Posterior vena cava (tissue), 2 donors: ENCODE measurements at regions of chr2 and their contacts with region 1.

Region 1: DNA sequence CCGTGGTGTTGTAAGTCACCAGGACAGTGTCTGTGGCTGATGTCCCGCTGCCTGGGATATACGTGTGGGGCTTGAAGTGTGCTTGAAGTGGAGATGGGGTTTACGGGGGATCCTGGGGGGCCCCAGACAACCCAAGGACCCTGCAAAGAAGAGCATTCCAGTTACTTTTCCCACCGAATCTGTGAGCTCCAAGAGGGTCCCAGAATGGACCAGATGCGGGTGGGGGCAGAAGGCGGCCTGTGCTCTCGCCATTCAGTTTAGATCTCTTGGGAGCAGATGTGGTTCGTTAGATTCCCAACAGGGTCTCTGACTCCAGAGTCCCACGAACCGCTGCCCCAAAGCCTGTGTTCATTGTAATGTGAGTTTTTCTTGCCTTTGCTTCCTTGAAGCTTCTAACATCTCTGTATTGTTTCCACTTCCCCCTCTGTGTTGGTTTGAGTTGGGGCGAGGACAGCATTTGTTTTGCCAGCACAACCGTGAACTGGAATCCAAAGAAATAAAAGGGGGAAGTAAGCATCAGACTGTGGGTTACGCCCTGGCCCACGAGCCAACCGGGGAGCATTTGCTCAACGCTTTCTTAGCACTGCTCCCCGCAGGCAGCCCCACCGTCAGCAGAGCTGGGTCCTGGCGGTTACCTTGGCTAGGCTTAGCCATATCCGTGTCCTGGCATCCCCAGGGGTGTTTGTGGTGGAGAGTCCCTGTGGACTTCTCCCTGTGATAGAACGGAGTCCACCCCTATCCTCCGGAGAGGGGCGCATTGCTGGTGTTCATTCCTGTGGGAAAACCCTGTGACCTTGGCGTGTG is 92.1 kb downstream of the SH3BP4 start:
- DNase-seq: peak; percentile 41

Region 2: DNA sequence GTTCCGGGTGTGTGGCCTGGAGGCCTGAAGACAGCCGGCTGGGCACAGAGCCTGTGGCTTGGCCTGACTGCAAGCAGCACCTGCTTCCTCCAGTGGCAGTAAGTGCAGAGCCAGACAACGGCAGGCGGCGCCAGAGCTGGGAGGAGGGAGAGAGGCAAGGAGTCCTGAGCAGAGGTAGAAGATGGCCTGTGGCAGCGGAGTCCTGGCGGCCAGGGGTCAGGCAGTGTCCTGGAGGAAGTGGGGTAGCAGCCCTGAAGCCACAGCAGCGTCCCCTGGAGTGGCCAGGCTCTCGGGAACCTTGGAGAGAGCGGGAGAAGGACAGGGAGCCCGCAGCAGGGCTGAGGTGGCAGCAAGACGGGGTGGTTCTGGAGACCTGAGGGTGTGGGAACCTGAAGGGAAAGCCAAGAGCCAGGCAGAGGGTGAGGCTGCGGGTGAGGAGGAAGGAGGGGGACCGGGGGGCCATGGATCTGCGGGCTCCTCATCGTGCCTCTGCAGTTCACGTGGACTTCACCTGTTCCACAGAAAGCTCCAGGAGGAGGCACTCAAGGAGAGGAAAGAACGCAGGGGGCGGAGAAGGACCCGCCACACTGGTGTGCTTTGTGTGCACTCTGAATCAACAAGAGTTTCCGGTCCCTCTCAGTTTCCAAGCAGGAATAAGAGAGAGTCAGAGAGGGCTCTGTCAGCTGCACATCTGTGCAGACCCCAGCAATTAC is 1563.3 kb before region 1 on chr2:
- intact Hi-C with region 1: no loop called
- DNase-seq: peak; percentile 76

Region 3: DNA sequence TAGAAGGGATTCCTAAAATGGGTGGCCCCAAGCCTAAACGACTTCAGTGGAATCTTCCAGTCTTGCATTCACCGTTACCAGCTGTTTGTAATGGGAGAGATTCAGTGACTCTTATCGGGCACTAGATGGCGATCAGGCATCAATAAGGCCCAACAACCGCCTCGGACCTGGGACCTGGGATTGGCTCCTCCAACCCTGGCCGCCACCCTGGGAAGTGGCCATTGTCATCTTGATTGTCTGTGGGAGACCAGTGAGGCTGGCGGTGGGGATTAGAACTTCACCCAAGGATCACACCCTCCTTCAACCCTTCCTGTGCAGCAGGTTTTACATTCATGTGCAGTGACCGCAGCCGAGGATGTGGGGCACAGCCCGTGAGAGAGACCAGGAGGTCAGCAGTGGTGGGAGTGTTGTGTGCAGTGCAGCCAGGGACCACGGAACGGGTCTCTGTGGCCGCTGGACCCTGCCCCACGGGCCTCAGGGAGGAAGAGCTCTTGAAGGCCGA is 908.2 kb before region 1 on chr2:
- intact Hi-C with region 1: no loop called
- DNase-seq: peak; percentile 86

Region 4: GRCh38 chr2:235066895-235067294 is 22.9 kb after region 1 on chr2:
- intact Hi-C with region 1: loop called in 1 of 2 experiments (anchors 1 kb)
- DNase-seq: no peak